Mammary epithelial cell (primary cell): ENCODE measurements at regions of chr3 and their contacts with region 1.

Region 1: GRCh38 chr3:87227104-87227834 is at the start of gene CHMP2B:
- DNase-seq: peak; percentile 93
- H3K4me3 ChIP-seq: peak within 1 kb of the TSS; percentile 76 to 81 (median 78)
- H3K27ac ChIP-seq: peak within 1 kb of the TSS; percentile 93
- H3K4me1 ChIP-seq: peaks cover 4% of the 10 kb centered on the region
- H3K27me3 ChIP-seq: no peaks in the 10 kb centered on the region
- CTCF ChIP-seq: no peak
- total RNA-seq, gene CHMP2B: 40.3 to 52.9 TPM

Region 2: GRCh38 chr3:87206074-87207034 is 20.9 kb before region 1 on chr3:
- CTCF ChIA-PET with region 1: no interaction called
- dilution Hi-C with region 1: no loop called
- in situ Hi-C with region 1: no loop called
- intact Hi-C with region 1: loop called (anchors 2 kb)
- DNase-seq: peak; percentile 91
- H3K4me3 ChIP-seq: no peak overlapping the region
- H3K27ac ChIP-seq: no peak overlapping the region
- H3K4me1 ChIP-seq: peaks cover 24% of the 10 kb centered on the region
- H3K27me3 ChIP-seq: no peaks in the 10 kb centered on the region
- CTCF ChIP-seq: no peak